ENCODE measurements at regions of chr4 and their contacts with region 1.

Region 1: GRCh38 chr4:56843421-56843899 is 22.0 kb upstream of the SPINK2 start:
- DNase-seq: no peak
- H3K4me3 ChIP-seq: no peak overlapping the region
- H3K4me3 Mint-ChIP-seq: no peak overlapping the region
- H3K27ac ChIP-seq: no peak overlapping the region
- H3K27ac Mint-ChIP-seq: no peak overlapping the region
- H3K4me1 ChIP-seq: no peaks in the 10 kb centered on the region
- H3K4me1 Mint-ChIP-seq: no peaks in the 10 kb centered on the region
- H3K27me3 ChIP-seq: no peaks in the 10 kb centered on the region
- H3K27me3 Mint-ChIP-seq: peaks cover 0 to 2% of the 10 kb centered on the region in 2 donors

Region 2: DNA sequence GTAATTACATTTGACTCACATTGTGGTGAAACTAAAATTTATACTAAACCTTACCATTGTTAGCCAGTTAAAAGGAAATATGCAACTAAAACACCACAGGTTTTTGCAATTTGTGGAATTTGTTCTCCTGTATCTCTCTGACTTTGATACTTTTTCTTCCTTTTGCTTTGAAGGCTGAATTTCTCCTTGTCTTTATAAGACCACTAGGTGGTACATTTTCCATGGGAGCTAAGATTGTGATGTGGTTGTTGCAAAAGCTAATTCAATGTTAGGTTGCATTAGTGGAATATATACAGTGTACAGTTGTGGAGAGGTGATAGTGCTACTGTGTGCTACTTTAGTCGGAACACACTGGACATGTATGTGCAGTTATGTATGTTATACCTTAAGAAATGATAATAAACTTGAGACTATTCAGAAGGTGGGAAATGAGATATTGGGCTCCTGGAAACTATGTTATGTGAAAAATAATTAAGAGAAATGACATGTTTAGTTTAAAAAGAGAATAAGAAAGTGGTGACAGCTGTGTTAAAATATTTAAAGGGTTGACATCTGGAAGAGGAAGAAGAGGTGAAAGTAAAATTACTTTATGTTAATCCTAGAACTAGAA is 267.5 kb before region 1 on chr4:
- CTCF ChIA-PET with region 1: interaction called, 12 read pairs
- POLR2A ChIA-PET with region 1: no interaction called
- intact Hi-C with region 1: no loop called
- DNase-seq: peak in 4 of 5 donors; percentile 10 to 23 (median 13)
- H3K4me3 ChIP-seq: no peak overlapping the region
- H3K4me3 Mint-ChIP-seq: no peak overlapping the region
- H3K27ac ChIP-seq: no peak overlapping the region
- H3K27ac Mint-ChIP-seq: no peak overlapping the region
- H3K4me1 ChIP-seq: no peaks in the 10 kb centered on the region
- H3K4me1 Mint-ChIP-seq: peaks cover 0 to 2% (median 0%) of the 10 kb centered on the region in 4 donors
- H3K27me3 ChIP-seq: no peaks in the 10 kb centered on the region
- H3K27me3 Mint-ChIP-seq: peaks cover 7 to 8% of the 10 kb centered on the region in 2 donors

Region 3: GRCh38 chr4:56821381-56822243 is 21.8 kb before region 1 on chr4 and contains the start of gene SPINK2:
- CTCF ChIA-PET with region 1: interaction called, 37 read pairs
- POLR2A ChIA-PET with region 1: no interaction called
- intact Hi-C with region 1: no loop called
- DNase-seq: peak; percentile 62 to 75 (median 67)
- H3K4me3 ChIP-seq: peak within 1 kb of the TSS in 1 of 2 donors; percentile 53
- H3K4me3 Mint-ChIP-seq: peak within 1 kb of the TSS; percentile 76 to 83 (median 82)
- H3K27ac ChIP-seq: no peak within 1 kb of the TSS
- H3K27ac Mint-ChIP-seq: peak within 1 kb of the TSS in 6 of 7 donors; percentile 15 to 72 (median 52)
- H3K4me1 ChIP-seq: peaks cover 27% of the 10 kb centered on the region
- H3K4me1 Mint-ChIP-seq: peaks cover 14 to 35% (median 24%) of the 10 kb centered on the region in 4 donors
- H3K27me3 ChIP-seq: no peaks in the 10 kb centered on the region
- H3K27me3 Mint-ChIP-seq: peaks cover 0 to 2% of the 10 kb centered on the region in 2 donors
- total RNA-seq, gene SPINK2: 3.2 to 3.6 TPM

Region 4: DNA sequence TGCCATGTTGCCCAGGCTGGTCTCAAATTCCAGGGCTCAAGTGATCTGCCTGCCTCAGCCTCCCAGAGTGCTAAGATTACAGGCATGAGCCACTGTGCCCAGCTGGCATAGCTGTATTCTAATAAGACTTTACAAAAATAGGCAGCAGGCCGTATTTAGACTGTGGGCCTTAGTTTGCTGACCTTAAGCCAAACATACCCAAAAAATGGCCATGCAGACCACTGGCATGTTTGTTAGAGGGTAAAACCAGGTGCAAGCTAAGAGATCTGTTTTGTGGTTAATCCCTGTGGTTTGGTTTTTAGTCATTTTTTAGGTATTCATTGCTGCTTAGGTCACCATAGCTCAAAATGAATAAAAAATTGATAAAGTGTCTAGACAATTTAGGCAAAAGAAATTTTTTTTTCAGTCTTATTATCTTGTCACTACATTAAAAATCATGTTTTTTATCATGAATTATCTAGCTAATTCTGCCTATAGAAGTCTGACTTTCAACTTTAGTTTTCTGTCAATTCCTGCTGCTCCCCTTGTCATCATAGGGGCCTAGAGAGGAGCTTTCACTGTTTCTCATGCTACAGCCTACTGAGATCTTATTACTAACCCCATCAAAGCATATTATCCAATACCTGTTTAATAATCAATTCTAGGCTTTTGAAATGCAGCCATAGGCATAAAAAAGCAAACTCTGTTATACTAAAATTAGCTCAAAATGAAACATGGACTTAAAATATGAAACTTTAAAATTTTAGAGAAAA is 14.5 kb before region 1 on chr4:
- CTCF ChIA-PET with region 1: interaction called, 37 read pairs
- POLR2A ChIA-PET with region 1: no interaction called
- intact Hi-C with region 1: no loop called
- DNase-seq: no peak
- H3K4me3 ChIP-seq: no peak overlapping the region
- H3K4me3 Mint-ChIP-seq: no peak overlapping the region
- H3K27ac ChIP-seq: no peak overlapping the region
- H3K27ac Mint-ChIP-seq: no peak overlapping the region
- H3K4me1 ChIP-seq: no peaks in the 10 kb centered on the region
- H3K4me1 Mint-ChIP-seq: no peaks in the 10 kb centered on the region
- H3K27me3 ChIP-seq: no peaks in the 10 kb centered on the region
- H3K27me3 Mint-ChIP-seq: no peaks in the 10 kb centered on the region